Right ventricle myocardium superior (tissue), 1 donor: ENCODE measurements at regions of chr3 and their contacts with region 1.

Region 1: DNA sequence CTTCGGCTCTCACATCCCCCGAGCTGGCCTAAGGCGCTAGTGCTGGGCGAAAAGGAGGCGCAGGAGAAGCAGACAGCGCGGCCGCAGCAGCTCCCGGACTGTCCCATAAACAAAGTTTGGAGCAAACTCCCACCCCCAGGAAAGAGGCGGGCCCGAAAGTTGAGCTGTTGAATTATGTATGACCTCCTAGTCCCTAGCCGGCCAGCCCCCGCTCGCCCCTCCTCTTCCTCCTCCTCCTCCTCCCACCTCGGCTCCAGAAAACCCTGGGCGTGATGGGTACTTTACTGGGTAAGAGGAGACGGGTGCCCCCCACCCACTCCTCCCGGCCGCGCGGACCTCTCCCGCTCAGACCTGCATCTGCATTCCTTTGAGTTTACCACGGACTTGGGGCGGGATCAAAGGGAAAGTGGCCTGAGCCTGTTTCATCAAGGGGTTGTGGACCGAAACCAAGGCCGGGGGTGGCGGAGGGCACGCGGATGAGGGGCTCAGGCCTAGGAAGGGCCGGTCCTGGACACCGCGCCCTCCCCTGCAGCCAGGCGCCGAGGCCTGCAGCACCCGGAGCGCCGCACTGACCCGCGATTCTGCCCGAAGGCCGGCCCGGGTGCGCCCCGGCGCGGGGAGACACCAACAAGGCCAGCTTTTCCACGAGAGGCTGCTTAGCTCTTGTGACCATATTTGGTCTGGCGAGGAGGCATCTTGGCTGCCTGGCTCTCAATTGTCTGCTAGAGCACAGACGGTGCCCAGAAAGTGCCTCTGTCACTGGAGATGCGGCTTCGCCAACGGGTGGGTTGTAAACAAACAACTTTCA is at the start of gene WWTR1:
- DNase-seq: peak; percentile 96
- ATAC-seq: peak; percentile 93
- total RNA-seq, gene WWTR1: 37.9 TPM

Region 2: GRCh38 chr3:149534671-149535332 is 123.3 kb before region 1 on chr3:
- intact Hi-C with region 1: loop called (anchors 5 kb)
- DNase-seq: peak; percentile 41
- ATAC-seq: peak; percentile 57

Region 3: DNA sequence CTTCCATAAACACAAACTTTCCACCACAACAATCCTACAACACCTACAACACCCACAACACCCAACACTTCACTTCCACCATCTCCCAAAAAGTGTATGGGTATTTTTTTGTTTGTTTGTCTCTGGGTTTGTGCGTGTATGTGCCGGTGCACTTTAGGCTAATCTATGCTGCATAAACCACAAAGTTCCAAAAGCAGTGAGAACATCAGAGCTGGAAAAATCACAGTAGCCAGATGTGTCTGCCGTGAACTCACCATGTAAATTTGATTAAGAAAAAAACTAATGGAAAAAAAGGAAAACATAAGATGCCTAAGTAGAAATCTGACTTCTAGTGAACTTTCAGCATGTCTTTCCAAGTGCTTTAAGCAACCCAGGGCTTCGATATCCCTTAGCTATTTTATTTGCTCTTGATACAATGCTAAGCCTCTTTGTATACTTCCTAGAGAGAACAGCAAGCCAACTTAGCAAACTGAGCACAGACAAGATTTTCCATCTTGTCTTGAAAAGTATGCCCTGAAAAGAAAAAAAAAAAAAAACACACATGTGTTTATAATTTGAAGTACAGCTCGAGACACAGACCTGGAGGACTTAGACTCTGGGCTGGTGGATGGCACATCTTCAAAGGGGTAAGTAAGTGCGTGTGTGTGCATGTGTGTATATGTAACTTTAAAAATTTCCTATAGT is 91.7 kb before region 1 on chr3:
- intact Hi-C with region 1: loop called (anchors 5 kb)
- DNase-seq: no peak
- ATAC-seq: no peak

Region 4: DNA sequence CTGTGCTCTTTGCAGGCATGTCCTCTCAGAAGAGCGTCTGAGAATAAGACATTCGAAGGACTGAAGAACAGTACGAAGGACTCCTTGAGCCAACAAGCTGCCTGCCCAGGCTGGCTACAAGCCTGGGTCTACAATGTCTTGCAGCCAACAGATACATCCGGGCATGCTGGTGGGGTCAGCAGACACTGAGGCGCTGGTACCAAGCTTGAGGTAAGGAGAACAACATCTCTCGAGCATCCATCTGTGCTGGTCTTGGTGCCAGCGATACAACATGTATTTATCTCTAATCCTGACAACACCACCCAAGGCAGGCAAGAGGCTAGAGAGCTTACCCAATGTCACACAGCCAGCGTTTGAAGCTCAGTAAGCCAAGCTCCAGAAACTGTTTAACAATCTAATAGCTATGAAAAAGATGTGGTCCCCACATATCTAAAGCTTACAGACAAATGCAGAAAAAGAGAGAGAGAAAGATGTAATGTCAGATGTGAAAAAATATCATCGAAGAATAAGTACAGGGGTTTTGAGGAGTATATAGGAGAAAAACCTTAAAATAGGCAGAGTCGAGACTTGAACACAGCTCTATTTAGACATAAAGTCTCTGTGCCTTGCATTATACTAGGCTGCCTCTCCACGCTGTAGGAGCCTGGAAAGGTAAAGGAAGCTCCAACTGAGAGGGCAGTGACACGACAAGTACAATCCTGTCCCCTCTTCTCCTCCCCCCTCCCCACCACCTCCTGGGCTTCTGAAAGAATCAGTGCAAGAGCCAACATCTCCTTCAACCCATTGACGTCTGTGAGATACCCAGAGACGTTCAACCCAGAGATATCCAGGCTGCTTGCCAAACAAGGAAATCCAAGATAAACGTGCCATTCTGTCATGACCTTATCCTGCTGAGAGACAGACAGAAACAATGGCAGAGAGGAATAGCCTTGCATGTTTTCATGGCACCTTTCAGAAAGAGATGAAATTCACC is 39.7 kb before region 1 on chr3:
- intact Hi-C with region 1: loop called (anchors 5 kb)
- DNase-seq: peak; percentile 61
- ATAC-seq: peak; percentile 91

Region 5: DNA sequence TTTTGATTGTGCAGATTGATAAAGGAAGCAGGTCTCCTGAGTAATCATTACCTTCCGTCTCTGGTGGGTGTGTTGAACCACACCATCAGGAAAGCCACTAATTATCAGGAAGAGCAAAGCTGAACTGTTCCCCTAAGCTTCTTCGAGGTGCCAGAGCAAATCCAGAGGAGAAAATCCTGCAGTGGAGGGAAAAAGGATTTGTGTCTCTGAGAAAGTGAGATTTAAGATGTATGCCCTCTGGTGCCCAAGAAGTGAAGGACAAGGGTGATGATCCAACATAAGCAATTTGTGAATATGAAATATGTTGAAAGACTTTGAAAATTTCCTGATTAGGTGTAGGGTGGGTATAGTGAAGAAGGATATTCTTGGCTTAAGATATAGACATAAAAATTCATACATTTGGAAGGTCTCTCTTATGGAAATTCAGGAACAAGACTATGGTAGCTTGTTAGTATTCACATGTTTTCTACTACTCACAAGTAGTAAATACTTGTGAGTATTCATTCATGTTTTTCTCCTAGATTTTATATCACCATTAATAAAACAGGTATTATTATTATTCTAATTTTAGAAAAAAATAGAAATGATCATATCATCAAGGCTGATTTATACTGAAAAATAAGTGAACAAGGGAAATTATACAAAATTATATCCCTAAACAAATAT is 59.4 kb after region 1 on chr3:
- intact Hi-C with region 1: loop called (anchors 10 kb)
- DNase-seq: no peak
- ATAC-seq: peak; percentile 73